Natural killer cell (primary cell): ENCODE measurements at regions of chr15 and their contacts with region 1.

Region 1: GRCh38 chr15:67101911-67102598 is 36.7 kb downstream of the SMAD3 start:
- DNase-seq: peak; percentile 44 to 86
- ATAC-seq: peak; percentile 67 to 88 (median 87)
- H3K4me3 ChIP-seq: no peak overlapping the region
- H3K4me3 Mint-ChIP-seq: no peak overlapping the region
- H3K27ac ChIP-seq: peak overlapping the region; percentile 79
- H3K27ac Mint-ChIP-seq: no peak overlapping the region
- H3K4me1 ChIP-seq: peaks cover 95% of the 10 kb centered on the region
- H3K4me1 Mint-ChIP-seq: peaks cover 26 to 42% of the 10 kb centered on the region in 2 donors
- H3K27me3 ChIP-seq: no peaks in the 10 kb centered on the region
- H3K27me3 Mint-ChIP-seq: peaks cover 0 to 8% of the 10 kb centered on the region in 2 donors
- CTCF ChIP-seq: no peak

Region 2: GRCh38 chr15:67065444-67066093 is 36.5 kb before region 1 on chr15 and contains the start of gene SMAD3:
- intact Hi-C with region 1: loop called (anchors 2 kb)
- DNase-seq: peak; percentile 64 to 87
- ATAC-seq: peak; percentile 52 to 75 (median 69)
- H3K4me3 ChIP-seq: peak within 1 kb of the TSS; percentile 89
- H3K4me3 Mint-ChIP-seq: peak within 1 kb of the TSS; percentile 93
- H3K27ac ChIP-seq: peak within 1 kb of the TSS; percentile 63
- H3K27ac Mint-ChIP-seq: peak within 1 kb of the TSS; percentile 61 to 92
- H3K4me1 ChIP-seq: peaks cover 50% of the 10 kb centered on the region
- H3K4me1 Mint-ChIP-seq: peaks cover 46 to 50% of the 10 kb centered on the region in 2 donors
- H3K27me3 ChIP-seq: no peaks in the 10 kb centered on the region
- H3K27me3 Mint-ChIP-seq: no peaks in the 10 kb centered on the region
- CTCF ChIP-seq: no peak
- total RNA-seq, gene SMAD3: 47.1 to 72.6 (median 63.0) TPM

Region 3: GRCh38 chr15:67091071-67091979 is 10.7 kb before region 1 on chr15:
- intact Hi-C with region 1: loop called (anchors 1 kb)
- DNase-seq: peak; percentile 77 to 87
- ATAC-seq: peak; percentile 76 to 94 (median 92)
- H3K4me3 ChIP-seq: no peak overlapping the region
- H3K4me3 Mint-ChIP-seq: peak overlapping the region; percentile 89
- H3K27ac ChIP-seq: peak overlapping the region; percentile 71
- H3K27ac Mint-ChIP-seq: peak overlapping the region; percentile 91 to 96
- H3K4me1 ChIP-seq: peaks cover 95% of the 10 kb centered on the region
- H3K4me1 Mint-ChIP-seq: peaks cover 73 to 84% of the 10 kb centered on the region in 2 donors
- H3K27me3 ChIP-seq: no peaks in the 10 kb centered on the region
- H3K27me3 Mint-ChIP-seq: no peaks in the 10 kb centered on the region
- CTCF ChIP-seq: no peak

Region 4: GRCh38 chr15:67134067-67134838 is 32.2 kb after region 1 on chr15:
- intact Hi-C with region 1: loop called (anchors 1 kb)
- DNase-seq: peak; percentile 61 to 91
- ATAC-seq: peak; percentile 91 to 97 (median 95)
- H3K4me3 ChIP-seq: peak overlapping the region; percentile 20
- H3K4me3 Mint-ChIP-seq: peak overlapping the region; percentile 93
- H3K27ac ChIP-seq: peak overlapping the region; percentile 92
- H3K27ac Mint-ChIP-seq: peak overlapping the region; percentile 100
- H3K4me1 ChIP-seq: peaks cover 77% of the 10 kb centered on the region
- H3K4me1 Mint-ChIP-seq: peaks cover 80 to 88% of the 10 kb centered on the region in 2 donors
- H3K27me3 ChIP-seq: no peaks in the 10 kb centered on the region
- H3K27me3 Mint-ChIP-seq: no peaks in the 10 kb centered on the region
- CTCF ChIP-seq: no peak

Region 5: GRCh38 chr15:67444100-67444499 is 342.0 kb after region 1 on chr15:
- intact Hi-C with region 1: no loop called
- DNase-seq: no peak
- ATAC-seq: no peak
- H3K4me3 ChIP-seq: no peak overlapping the region
- H3K4me3 Mint-ChIP-seq: no peak overlapping the region
- H3K27ac ChIP-seq: no peak overlapping the region
- H3K27ac Mint-ChIP-seq: no peak overlapping the region
- H3K4me1 ChIP-seq: no peaks in the 10 kb centered on the region
- H3K4me1 Mint-ChIP-seq: no peaks in the 10 kb centered on the region
- H3K27me3 ChIP-seq: no peaks in the 10 kb centered on the region
- H3K27me3 Mint-ChIP-seq: no peaks in the 10 kb centered on the region
- CTCF ChIP-seq: no peak